WTC11 (cell line): ENCODE measurements at regions of chr10 and their contacts with region 1.

Region 1: DNA sequence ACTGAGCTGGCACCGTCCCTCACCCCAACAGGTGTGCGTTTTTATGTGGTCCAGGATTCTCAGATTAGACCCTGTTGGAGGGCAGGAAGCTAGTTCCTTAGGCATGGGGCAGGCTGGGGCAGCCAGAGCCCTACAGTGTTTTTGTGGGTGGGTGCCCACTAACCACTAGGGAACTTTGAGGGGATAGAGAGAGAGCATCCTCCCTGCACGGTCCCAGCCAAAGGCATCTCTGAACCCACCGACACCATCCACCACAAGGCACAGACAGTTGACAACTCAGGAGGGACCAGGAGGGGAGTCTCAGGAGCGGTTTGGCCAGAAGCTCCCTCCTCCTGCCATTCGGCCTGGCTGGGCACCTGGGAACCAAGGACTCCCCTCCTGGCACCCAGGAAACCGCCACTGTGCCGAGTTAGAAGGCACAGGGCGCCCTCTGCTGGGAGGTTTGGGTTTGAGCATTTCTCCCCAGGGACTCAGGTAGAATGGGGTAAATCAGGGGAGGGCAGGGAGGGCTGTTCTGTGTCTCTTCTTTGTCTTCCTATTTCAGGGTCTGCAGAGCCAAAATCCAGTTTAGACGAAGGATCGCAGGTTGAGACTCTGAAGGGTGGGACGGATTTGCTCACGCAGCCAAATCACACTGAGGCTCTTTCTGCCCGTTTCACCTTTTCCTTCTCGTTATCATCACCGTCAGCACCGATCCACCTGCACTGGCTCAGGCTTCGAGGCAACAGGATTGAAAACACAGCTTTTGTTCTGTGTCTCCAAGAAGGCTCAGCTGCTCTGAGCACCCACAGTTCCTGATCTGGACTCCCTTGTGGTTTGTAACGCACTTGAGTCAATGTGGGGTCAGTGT is 84.8 kb upstream of the COL13A1 start:
- DNase-seq: peak; percentile 84
- ATAC-seq: peak; percentile 88
- H3K4me3 Mint-ChIP-seq: no peak overlapping the region
- H3K27ac Mint-ChIP-seq: 0 out of 2 replicates have a peak overlapping the region, but pooled peaks have one; percentile 8
- H3K4me1 Mint-ChIP-seq: peaks cover 7% of the 10 kb centered on the region
- H3K27me3 Mint-ChIP-seq: peaks cover 8% of the 10 kb centered on the region
- CTCF ChIP-seq: peak; percentile 80

Region 2: DNA sequence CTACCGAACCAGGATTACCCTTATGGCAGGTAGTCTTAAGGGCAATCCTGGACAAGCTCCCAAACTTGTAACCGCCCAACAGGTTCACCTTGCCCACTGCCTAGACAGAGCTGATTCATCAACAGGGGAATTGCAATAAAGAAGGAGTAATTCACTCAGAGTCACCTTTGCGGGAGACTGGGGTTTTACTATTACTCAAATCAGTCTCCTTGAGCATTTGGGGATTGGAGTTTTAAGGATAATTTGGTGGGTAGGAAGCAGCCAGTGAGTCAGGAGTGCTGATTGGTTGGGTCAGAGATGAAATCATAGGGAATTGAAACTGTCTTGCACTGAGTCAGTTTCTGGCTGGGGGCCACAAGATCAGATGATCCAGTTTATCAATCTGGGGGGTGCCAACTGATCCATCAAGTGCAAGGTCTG is 413.3 kb before region 1 on chr10:
- CTCF ChIA-PET with region 1: no interaction called
- POLR2A ChIA-PET with region 1: no interaction called
- DNase-seq: no peak
- ATAC-seq: no peak
- H3K4me3 Mint-ChIP-seq: no peak overlapping the region
- H3K27ac Mint-ChIP-seq: no peak overlapping the region
- H3K4me1 Mint-ChIP-seq: peaks cover 8% of the 10 kb centered on the region; the same call in 1 of the 2 replicates
- H3K27me3 Mint-ChIP-seq: no peaks in the 10 kb centered on the region; the same call in 1 of the 2 replicates
- CTCF ChIP-seq: no peak

Region 3: DNA sequence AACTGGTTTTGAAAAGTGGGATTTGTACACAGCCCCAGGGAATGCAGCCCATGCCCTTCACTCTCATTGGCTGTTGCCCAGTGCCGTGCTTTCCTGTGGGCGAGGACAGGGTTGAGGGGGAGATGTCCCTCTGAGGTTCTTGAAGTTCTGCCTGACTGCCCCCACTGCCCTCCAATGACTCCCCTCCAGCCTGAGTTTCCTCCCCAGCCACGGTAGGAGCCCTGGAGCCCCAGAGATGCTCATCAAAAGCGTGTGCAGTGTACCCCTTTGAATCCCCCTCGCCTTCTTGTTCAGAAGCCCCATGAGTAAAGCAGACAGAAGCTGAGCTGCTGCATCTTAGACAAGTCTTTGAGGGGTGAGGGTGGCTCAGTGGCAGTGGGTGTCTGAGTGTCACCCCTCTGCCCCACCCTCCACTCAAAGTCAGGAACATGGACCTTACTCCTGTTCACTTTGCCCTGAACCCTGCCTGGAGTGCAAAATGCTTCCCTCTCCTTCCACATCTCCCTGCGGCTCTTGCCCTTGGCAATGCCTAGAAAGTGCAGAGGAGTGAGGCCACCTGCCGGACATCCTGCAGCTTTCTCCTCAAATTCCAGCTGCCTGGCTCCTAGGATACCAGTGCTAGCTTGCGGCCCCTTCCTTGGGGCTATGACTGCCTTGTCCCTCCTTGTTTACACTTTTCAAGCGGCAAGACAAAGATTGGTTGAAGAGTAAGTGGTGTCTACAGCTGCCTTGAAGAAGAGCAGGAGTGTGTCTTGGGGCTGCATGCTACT is 67.0 kb before region 1 on chr10:
- CTCF ChIA-PET with region 1: interaction called, 140 read pairs
- POLR2A ChIA-PET with region 1: interaction called, 3 read pairs
- DNase-seq: peak; percentile 43
- ATAC-seq: peak; percentile 66
- H3K4me3 Mint-ChIP-seq: no peak overlapping the region
- H3K27ac Mint-ChIP-seq: no peak overlapping the region
- H3K4me1 Mint-ChIP-seq: peaks cover 50% of the 10 kb centered on the region
- H3K27me3 Mint-ChIP-seq: no peaks in the 10 kb centered on the region
- CTCF ChIP-seq: no peak

Region 4: DNA sequence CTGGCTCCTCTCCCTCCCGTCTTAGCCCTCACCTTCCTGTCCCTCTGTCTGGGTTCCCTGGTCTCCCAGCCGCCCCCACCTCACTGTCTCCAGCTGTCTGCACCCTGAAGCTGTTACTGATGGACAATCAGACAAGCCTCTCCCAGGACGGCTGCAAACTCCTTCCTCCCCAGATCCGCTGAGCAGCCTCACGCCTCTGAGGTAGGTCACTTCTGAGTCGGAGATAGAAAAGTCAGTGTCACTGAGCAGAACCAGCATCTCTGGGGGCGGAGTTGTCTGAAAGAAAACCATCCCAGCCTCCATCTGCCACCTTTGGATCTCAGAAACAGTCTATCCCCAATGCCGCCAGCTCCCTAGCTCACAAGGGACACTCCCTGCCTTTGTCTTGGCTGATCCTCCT is 59.5 kb before region 1 on chr10:
- CTCF ChIA-PET with region 1: interaction called, 67 read pairs
- POLR2A ChIA-PET with region 1: no interaction called
- DNase-seq: no peak
- ATAC-seq: no peak
- H3K4me3 Mint-ChIP-seq: no peak overlapping the region
- H3K27ac Mint-ChIP-seq: no peak overlapping the region
- H3K4me1 Mint-ChIP-seq: peaks cover 48% of the 10 kb centered on the region
- H3K27me3 Mint-ChIP-seq: peaks cover 5% of the 10 kb centered on the region
- CTCF ChIP-seq: no peak

Region 5: DNA sequence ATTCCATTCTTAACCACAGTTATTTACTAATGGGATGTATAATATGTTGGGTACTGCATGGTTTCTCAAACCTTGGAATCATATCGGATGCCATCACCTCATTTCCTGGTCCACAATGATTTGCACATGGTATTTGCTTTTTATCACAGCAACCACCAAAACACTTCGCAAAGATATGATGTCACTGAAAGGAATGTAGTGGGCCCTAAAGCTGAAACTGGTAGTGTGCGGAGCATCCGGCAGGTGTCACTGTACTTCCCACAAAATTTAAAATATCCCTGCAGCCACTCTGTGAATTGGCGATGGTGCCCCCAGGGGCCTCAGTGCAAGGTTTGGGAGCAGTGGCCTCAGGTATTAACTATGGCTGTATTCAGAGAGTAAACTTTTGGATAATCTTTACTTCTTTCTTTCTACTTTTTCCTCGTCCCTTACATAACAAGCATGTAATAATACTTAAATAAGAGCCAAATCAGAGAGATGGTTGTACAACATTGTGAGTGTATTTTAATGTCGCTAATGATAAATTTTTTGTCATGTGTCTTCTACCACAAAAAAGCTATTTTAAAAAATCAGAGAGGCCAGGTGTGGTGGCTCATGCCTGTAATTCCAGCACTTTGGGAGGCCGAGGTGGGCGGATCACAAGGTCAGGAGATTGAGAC is 20.7 kb before region 1 on chr10:
- CTCF ChIA-PET with region 1: interaction called, 39 read pairs
- POLR2A ChIA-PET with region 1: interaction called, 5 read pairs
- DNase-seq: peak; percentile 58
- ATAC-seq: peak; percentile 91
- H3K4me3 Mint-ChIP-seq: no peak overlapping the region
- H3K27ac Mint-ChIP-seq: no peak overlapping the region
- H3K4me1 Mint-ChIP-seq: no peaks in the 10 kb centered on the region
- H3K27me3 Mint-ChIP-seq: peaks cover 10% of the 10 kb centered on the region
- CTCF ChIP-seq: peak; percentile 33; the same call in 1 of the 2 replicates

Region 6: DNA sequence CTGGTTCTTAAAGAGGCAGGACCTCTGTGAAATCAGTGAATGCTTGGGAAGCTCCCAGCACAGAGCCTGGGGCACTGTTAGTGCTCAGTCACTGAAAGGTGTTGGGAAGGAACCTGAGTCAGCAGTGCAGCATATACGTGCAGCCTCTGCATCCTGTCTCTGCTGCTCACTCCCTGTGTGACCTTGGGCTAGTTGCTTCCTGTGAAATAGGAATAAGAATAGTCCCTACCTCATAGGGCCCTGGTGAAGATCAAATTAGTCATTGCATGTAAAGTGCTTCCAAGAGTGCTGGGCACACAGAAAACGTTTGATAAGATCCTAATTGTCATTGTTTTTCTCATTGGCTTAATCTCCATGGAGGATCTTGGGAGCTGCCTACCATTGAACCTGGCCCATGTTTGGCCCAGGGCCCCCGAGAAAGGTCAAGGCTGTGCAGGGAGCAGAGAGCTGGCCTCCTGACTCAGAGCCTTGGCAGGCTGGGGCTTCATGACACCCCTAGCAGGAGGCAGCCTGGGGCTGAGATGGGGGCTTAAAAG is 11.5 kb after region 1 on chr10:
- CTCF ChIA-PET with region 1: interaction called, 20 read pairs
- POLR2A ChIA-PET with region 1: no interaction called
- DNase-seq: no peak
- ATAC-seq: peak; percentile 74
- H3K4me3 Mint-ChIP-seq: no peak overlapping the region
- H3K27ac Mint-ChIP-seq: peak overlapping the region; percentile 38; the same call in 1 of the 2 replicates
- H3K4me1 Mint-ChIP-seq: peaks cover 26% of the 10 kb centered on the region
- H3K27me3 Mint-ChIP-seq: peaks cover 5% of the 10 kb centered on the region
- CTCF ChIP-seq: no peak